ENCODE measurements at regions of chr6 and their contacts with region 1.

Region 1: DNA sequence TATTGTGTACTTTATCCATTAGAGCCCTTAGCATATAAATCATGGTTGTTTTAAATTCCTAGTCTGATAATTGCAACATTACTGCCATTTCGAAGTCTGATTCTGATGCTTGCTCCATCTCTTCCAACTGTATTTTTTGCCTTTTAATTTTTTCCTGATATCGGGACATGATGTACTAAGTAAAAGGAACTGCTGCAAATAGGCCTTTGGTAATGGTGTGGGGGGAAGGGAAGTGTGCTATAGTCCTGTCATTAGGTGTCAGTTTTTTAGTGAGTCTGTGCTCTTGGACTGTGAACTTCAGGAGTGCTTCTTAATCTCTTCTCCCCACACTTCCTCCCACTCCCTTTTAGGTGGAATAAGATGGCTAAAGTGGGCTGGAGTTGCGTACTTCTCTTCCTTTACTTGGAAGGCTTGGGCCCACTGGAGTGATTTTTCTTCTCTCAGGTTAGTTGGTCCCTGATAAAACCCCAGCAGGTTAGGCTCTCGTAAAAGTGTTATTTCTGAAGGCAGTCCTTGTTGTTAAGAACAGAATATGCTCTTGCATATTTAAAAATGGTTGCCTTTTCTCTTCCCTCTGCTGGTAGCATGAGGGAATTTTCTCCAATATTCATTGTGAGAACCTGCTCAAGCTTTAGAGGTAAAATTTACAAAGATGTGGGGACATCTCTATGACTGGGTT is 18.1 kb downstream of the STXBP5 start:
- DNase-seq: no peak
- H3K4me3 ChIP-seq: no peak overlapping the region
- H3K27ac ChIP-seq: no peak overlapping the region
- H3K4me1 ChIP-seq: peaks cover 0 to 4% (median 2%) of the 10 kb centered on the region in 4 experiments; a peak in 2 of 7 replicates
- H3K27me3 ChIP-seq: no peaks in the 10 kb centered on the region
- CTCF ChIP-seq: peak in 1 of 3 experiments; percentile 41; a peak in 2 of 4 replicates
- EP300 ChIP-seq: no peak
- POLR2A ChIP-seq: no peak
- RAD21 ChIP-seq: peak; percentile 19 to 29

Region 2: DNA sequence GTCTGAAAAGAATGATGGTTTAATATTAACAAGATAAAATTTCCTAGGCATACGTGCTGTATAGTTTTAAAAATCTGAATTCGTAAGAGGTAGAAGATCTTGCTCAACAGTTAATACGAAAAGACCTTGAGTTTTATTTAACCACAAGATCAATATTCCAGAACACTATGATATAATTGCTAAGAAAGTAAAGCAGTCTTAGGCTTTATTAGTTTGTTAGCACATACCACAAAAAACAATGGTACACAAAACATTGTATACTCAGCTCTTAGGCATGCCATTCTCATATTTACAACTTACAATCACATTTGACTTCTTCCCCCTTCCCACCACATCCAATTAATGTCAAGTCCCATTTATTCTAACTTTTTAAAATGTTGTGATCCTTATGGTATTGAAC is 42.5 kb before region 1 on chr6:
- CTCF ChIA-PET with region 1: no interaction called
- POLR2A ChIA-PET with region 1: no interaction called
- DNase-seq: no peak
- H3K4me3 ChIP-seq: no peak overlapping the region
- H3K27ac ChIP-seq: no peak overlapping the region
- H3K4me1 ChIP-seq: no peaks in the 10 kb centered on the region
- H3K27me3 ChIP-seq: no peaks in the 10 kb centered on the region
- CTCF ChIP-seq: no peak
- EP300 ChIP-seq: no peak
- POLR2A ChIP-seq: no peak
- RAD21 ChIP-seq: no peak

Region 3: GRCh38 chr6:147238164-147238563 is 15.9 kb after region 1 on chr6:
- CTCF ChIA-PET with region 1: interaction called, 10 read pairs
- POLR2A ChIA-PET with region 1: no interaction called
- DNase-seq: no peak
- H3K4me3 ChIP-seq: no peak overlapping the region
- H3K27ac ChIP-seq: no peak overlapping the region
- H3K4me1 ChIP-seq: peaks cover 0 to 3% (median 0%) of the 10 kb centered on the region in 4 experiments; a peak in 1 of 7 replicates
- H3K27me3 ChIP-seq: no peaks in the 10 kb centered on the region
- CTCF ChIP-seq: no peak
- EP300 ChIP-seq: no peak
- POLR2A ChIP-seq: no peak
- RAD21 ChIP-seq: no peak

Region 4: DNA sequence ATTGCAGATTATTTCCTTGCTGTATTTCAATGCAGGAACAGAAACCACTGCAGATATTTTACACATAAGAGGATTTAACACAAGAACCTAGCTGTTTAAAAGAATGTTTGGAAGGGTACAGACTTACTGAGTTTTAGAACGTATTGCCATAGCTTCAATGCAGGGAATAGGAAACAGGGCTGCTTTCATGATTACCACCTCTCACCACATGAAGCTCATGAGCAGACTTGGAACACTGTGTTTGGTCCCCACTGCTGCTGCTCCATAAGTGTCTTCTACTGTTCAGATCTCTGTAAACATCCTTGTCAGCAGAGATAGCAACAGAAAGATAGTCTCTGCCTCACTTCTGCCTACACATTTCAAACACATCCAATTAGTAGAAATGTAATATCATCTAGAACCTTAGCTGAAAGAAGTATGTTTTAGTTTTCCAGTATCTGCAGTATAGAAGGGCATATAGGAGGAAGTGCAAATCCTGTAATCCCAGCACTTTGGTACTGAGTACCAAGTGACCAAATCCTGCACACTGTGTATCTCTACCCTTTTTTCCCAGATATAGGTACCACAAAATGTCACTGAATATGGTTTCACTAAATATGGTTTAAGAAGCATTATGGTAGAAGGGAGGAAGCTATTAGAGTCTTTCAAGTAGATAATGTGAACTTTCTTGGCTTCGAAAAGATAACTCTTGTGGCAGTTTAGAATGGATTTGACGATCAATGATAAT is 33.8 kb after region 1 on chr6:
- CTCF ChIA-PET with region 1: no interaction called
- POLR2A ChIA-PET with region 1: no interaction called
- DNase-seq: no peak
- H3K4me3 ChIP-seq: no peak overlapping the region
- H3K27ac ChIP-seq: no peak overlapping the region
- H3K4me1 ChIP-seq: no peaks in the 10 kb centered on the region
- H3K27me3 ChIP-seq: no peaks in the 10 kb centered on the region
- CTCF ChIP-seq: no peak
- EP300 ChIP-seq: no peak
- POLR2A ChIP-seq: no peak
- RAD21 ChIP-seq: no peak

Measured in H1 (cell line).